Sigmoid colon (tissue), 7 donors: ENCODE measurements at regions of chr2 and their contacts with region 1.

Region 1: GRCh38 chr2:27754138-27754588 is 17.4 kb upstream of the MRPL33 start:
- DNase-seq: peak; percentile 85
- H3K4me3 ChIP-seq: no peak overlapping the region
- H3K27ac ChIP-seq: no peak overlapping the region
- H3K4me1 ChIP-seq: no peaks in the 10 kb centered on the region
- H3K27me3 ChIP-seq: no peaks in the 10 kb centered on the region
- CTCF ChIP-seq: peak; percentile 77 to 84 (median 81)
- EP300 ChIP-seq: no peak
- POLR2A ChIP-seq: no peak

Region 2: DNA sequence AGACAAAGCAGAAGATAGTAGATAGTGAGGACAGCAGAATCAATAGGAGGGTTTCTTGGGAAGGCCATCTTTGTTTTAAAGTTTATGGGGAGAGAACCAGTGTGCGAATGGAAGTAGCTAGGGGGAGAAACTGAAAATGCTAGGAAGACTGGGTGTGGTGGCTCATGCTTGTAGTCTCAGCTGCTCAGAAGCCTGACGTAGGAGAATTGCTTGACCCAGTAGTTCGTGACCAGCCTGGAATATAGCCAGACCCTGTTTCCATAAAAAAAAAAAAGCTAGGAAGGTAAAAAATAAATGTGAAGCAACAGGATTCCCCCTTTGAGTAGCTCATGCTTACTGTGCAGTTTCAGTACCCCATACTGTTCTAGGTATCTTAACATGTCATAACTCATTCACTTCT is 1371.6 kb before region 1 on chr2:
- intact Hi-C with region 1: no loop called
- DNase-seq: no peak
- H3K4me3 ChIP-seq: no peak overlapping the region
- H3K27ac ChIP-seq: no peak overlapping the region
- H3K4me1 ChIP-seq: no peaks in the 10 kb centered on the region
- H3K27me3 ChIP-seq: no peaks in the 10 kb centered on the region
- CTCF ChIP-seq: no peak
- EP300 ChIP-seq: no peak
- POLR2A ChIP-seq: no peak

Region 3: GRCh38 chr2:26640781-26641564 is 1113.2 kb before region 1 on chr2 and contains the start of gene CIB4:
- intact Hi-C with region 1: no loop called
- DNase-seq: no peak
- H3K4me3 ChIP-seq: no peak within 1 kb of the TSS
- H3K27ac ChIP-seq: no peak within 1 kb of the TSS
- H3K4me1 ChIP-seq: no peaks in the 10 kb centered on the region
- H3K27me3 ChIP-seq: no peaks in the 10 kb centered on the region
- CTCF ChIP-seq: no peak
- EP300 ChIP-seq: no peak
- POLR2A ChIP-seq: no peak
- total RNA-seq, gene CIB4: not detected

Region 4: GRCh38 chr2:28274911-28275695 is 520.9 kb after region 1 on chr2:
- intact Hi-C with region 1: loop called (anchors 5 kb)
- DNase-seq: no peak
- H3K4me3 ChIP-seq: no peak overlapping the region
- H3K27ac ChIP-seq: peak overlapping the region; percentile 74 to 81 (median 75)
- H3K4me1 ChIP-seq: peaks cover 0 to 35% (median 24%) of the 10 kb centered on the region in 4 donors
- H3K27me3 ChIP-seq: no peaks in the 10 kb centered on the region
- CTCF ChIP-seq: no peak
- EP300 ChIP-seq: no peak
- POLR2A ChIP-seq: no peak

Region 5: DNA sequence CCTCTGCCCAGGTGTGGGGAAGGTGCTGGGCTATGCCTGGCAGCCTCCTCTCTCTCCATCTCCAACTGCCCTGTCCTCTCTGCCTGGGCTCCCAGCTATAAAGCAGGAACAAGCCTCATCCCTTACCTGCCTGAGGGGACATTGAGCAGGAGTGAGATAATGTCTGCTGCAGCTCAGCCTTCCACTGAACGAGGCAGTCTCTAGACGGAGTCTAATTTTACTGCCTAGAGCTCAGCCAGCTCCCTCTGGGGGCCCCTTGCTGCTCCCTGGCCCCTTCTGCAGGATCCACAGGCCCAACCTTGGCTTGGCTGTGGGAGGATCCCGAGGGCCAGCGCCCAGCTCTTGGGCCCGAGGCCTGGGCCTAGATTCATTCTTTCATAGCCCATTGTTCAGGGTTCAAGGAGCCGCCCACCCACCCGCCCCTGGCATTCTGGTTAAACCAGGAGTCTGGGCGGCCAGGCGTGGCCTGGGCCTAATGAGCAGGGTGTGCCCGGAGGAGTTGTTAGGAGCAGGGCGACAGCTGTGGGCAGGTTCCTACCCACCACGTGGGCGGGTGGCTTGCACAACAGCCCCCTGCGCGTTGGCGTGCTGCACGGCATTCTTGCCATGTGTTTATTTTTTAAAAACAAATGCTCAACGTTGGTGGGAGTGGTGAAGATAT is 683.1 kb after region 1 on chr2:
- intact Hi-C with region 1: loop called (anchors 5 kb)
- DNase-seq: peak; percentile 58
- H3K4me3 ChIP-seq: no peak overlapping the region
- H3K27ac ChIP-seq: no peak overlapping the region
- H3K4me1 ChIP-seq: no peaks in the 10 kb centered on the region
- H3K27me3 ChIP-seq: no peaks in the 10 kb centered on the region
- CTCF ChIP-seq: no peak
- EP300 ChIP-seq: no peak
- POLR2A ChIP-seq: no peak

Region 6: DNA sequence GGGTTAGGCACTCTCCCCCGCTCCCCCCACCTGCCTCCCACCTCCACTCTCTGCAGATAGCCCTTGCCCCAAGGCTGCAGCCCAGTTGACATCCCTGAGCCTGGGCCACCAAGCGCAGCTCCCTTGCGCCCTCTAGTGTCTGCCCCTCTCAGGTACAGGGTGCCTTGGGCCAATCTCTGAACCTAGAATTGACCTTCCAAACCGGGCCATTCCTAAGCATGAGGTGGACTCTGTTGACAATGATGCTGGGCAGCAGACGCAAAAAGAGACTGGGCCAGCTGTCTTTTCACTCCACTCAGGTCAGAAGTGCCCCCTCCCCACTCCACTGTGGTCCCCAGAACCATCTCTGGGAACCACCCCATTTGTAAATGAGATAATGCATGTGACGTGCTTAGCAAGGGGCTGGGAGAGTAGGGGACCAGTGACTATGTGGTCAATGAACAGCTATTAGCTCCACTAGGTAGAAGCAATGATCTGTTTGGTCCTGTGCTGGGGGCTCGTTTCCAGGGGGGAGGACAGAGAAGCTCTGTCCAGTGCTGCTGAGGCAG is 698.4 kb after region 1 on chr2:
- intact Hi-C with region 1: loop called (anchors 1 kb)
- DNase-seq: peak; percentile 81
- H3K4me3 ChIP-seq: no peak overlapping the region
- H3K27ac ChIP-seq: no peak overlapping the region
- H3K4me1 ChIP-seq: no peaks in the 10 kb centered on the region
- H3K27me3 ChIP-seq: no peaks in the 10 kb centered on the region
- CTCF ChIP-seq: peak; percentile 92 to 94 (median 92)
- EP300 ChIP-seq: no peak
- POLR2A ChIP-seq: no peak